Heart right ventricle (tissue), 16 donors: ENCODE measurements at regions of chrX and their contacts with region 1.

Region 1: DNA sequence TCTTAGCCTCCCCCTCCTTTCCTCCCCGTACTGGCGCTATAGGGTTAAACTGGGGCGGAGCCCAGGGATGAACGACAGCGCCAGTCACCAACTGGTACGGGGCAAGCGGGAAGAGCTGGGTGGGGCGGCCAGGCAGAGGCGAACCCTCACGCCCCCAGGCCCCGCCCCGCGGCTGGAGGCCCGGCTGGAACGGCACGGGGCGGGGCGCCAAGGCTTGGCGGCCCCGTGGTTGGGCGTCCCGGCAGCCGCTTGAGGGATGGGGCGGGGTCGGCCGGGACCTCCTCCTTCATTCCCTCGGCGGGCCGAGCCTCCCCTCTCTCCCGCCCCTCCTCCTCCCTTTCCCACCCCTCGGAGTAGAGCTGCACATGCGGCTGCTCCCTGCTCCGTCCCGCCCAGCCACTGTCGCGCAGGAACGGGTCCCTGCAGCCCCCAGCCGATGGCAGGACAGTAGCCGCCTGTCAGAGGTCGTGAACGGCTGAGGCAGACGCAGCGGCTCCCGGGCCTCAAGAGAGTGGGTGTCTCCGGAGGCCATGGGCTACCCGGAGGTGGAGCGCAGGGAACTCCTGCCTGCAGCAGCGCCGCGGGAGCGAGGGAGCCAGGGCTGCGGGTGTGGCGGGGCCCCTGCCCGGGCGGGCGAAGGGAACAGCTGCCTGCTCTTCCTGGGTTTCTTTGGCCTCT is at the start of gene EDA:
- DNase-seq: peak; percentile 87 to 88
- ATAC-seq: peak; percentile 96 to 99 (median 98)
- H3K4me3 ChIP-seq: peak within 1 kb of the TSS; percentile 49 to 87 (median 68)
- H3K27ac ChIP-seq: peak within 1 kb of the TSS in 8 of 10 donors; percentile 35 to 64 (median 48)
- H3K4me1 ChIP-seq: peaks cover 0 to 16% (median 0%) of the 10 kb centered on the region in 9 donors
- H3K27me3 ChIP-seq: peaks cover 0 to 46% (median 0%) of the 10 kb centered on the region in 7 donors
- CTCF ChIP-seq: no peak
- total RNA-seq, gene EDA: 4.2 to 9.4 (median 5.4) TPM

Region 2: DNA sequence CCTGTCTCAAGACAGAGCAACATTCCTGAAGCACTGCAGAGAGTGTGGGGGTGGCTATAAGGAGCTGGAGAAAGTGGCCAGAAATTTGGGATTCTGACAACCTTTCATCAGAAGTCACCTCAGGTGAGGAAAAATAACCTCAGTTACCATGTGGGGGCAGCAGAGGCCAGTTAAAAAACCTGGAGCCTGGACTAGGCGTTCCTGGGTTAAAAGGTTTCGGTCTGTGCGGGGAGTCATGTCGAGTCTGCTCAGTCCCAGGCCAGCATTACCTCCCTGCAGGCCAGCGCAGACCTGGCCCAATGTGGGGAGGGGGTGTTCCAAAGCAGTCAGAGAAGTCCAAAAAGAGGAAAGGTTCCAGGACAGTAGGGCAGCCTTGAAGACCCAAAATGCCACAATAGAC is 122.7 kb before region 1 on chrX:
- intact Hi-C with region 1: loop called in 1 of 10 experiments (anchors 5 kb)
- DNase-seq: peak; percentile 6 to 14
- ATAC-seq: peak in 7 of 8 donors; percentile 38 to 63 (median 49)
- H3K4me3 ChIP-seq: no peak overlapping the region
- H3K27ac ChIP-seq: no peak overlapping the region
- H3K4me1 ChIP-seq: no peaks in the 10 kb centered on the region
- H3K27me3 ChIP-seq: peaks cover 0 to 67% (median 0%) of the 10 kb centered on the region in 7 donors
- CTCF ChIP-seq: peak in 8 of 9 donors; percentile 10 to 54 (median 46)

Region 3: GRCh38 chrX:69538321-69538876 is 77.5 kb before region 1 on chrX:
- intact Hi-C with region 1: loop called in 7 of 10 experiments (anchors 1 to 5 kb)
- DNase-seq: peak; percentile 70 to 83
- ATAC-seq: peak; percentile 95 to 99 (median 96)
- H3K4me3 ChIP-seq: peak overlapping the region in 9 of 10 donors; percentile 27 to 59 (median 54)
- H3K27ac ChIP-seq: peak overlapping the region in 4 of 10 donors; percentile 52 to 71 (median 54)
- H3K4me1 ChIP-seq: peaks cover 0 to 17% (median 3%) of the 10 kb centered on the region in 9 donors
- H3K27me3 ChIP-seq: peaks cover 0 to 34% (median 0%) of the 10 kb centered on the region in 7 donors
- CTCF ChIP-seq: peak; percentile 60 to 83 (median 77)

Region 4: GRCh38 chrX:69543572-69543971 is 72.3 kb before region 1 on chrX:
- intact Hi-C with region 1: loop called in 7 of 10 experiments (anchors 1 to 5 kb)
- DNase-seq: no peak
- ATAC-seq: no peak
- H3K4me3 ChIP-seq: no peak overlapping the region
- H3K27ac ChIP-seq: no peak overlapping the region
- H3K4me1 ChIP-seq: peaks cover 0 to 15% (median 3%) of the 10 kb centered on the region in 9 donors
- H3K27me3 ChIP-seq: peaks cover 0 to 35% (median 0%) of the 10 kb centered on the region in 7 donors
- CTCF ChIP-seq: no peak

Region 5: DNA sequence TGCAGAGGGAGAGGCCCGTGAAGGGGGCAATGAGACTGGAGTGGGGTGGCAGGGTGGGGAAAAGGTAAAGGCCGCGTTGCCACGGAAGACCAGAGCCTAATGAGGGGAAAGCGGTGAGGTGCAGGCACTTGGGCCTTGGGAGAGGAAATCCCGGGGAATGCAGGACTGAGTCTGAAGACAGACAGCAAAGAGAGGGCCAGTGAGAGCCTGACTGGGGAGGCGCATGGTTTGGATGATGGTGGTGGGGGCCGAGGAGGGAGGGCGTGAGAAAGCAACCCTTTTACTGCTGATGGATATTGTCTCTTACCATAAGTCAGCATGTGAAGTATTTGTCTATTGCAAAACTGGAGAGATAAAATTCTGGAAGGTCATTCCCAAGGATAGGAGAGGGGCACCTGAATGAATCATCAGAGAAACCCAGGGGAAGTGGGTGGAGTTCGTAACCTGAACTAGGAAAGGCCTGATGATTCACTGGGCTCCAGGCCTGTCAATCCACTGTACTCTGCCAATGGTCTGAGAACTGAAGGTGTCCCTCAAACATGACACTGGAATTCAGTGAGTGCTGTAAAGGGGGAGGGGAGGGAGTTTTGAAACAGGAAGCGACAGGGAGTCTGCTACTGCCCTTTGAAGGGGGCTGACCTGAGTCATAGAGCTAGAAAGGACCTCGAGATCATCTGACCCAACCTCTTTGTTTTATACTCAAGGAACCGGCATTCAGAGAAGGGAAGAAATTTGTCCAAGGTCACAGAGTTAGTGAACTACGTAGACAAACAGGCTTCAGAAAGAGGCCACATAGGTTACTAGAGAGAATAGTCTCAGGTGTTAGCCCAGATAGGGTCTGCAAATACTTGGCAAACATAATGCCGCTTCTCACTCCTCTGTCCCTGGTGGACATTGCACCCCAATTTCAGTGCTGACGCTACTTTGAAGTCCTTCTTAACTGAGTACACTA is 59.6 kb before region 1 on chrX:
- intact Hi-C with region 1: loop called in 1 of 10 experiments (anchors 5 kb)
- DNase-seq: no peak
- ATAC-seq: peak in 6 of 8 donors; percentile 25 to 85 (median 34)
- H3K4me3 ChIP-seq: no peak overlapping the region
- H3K27ac ChIP-seq: peak overlapping the region in 2 of 10 donors; percentile 16 to 23
- H3K4me1 ChIP-seq: no peaks in the 10 kb centered on the region
- H3K27me3 ChIP-seq: peaks cover 0 to 4% (median 0%) of the 10 kb centered on the region in 7 donors
- CTCF ChIP-seq: no peak

Region 6: GRCh38 chrX:69568828-69569227 is 47.1 kb before region 1 on chrX:
- intact Hi-C with region 1: no loop called
- DNase-seq: no peak
- ATAC-seq: no peak
- H3K4me3 ChIP-seq: no peak overlapping the region
- H3K27ac ChIP-seq: no peak overlapping the region
- H3K4me1 ChIP-seq: no peaks in the 10 kb centered on the region
- H3K27me3 ChIP-seq: peaks cover 0 to 54% (median 0%) of the 10 kb centered on the region in 7 donors
- CTCF ChIP-seq: no peak

Region 7: GRCh38 chrX:70030301-70030767 is 414.4 kb after region 1 on chrX:
- intact Hi-C with region 1: loop called in 6 of 10 experiments (anchors 5 to 10 kb)
- DNase-seq: peak; percentile 11 to 46
- ATAC-seq: peak in 7 of 8 donors; percentile 44 to 74 (median 68)
- H3K4me3 ChIP-seq: no peak overlapping the region
- H3K27ac ChIP-seq: no peak overlapping the region
- H3K4me1 ChIP-seq: peaks cover 0 to 16% (median 0%) of the 10 kb centered on the region in 9 donors
- H3K27me3 ChIP-seq: peaks cover 0 to 48% (median 0%) of the 10 kb centered on the region in 7 donors
- CTCF ChIP-seq: peak; percentile 46 to 79 (median 69)